Head of caudate nucleus (tissue), 42 donors: ENCODE measurements at regions of chr9 and their contacts with region 1.

Region 1: GRCh38 chr9:14344053-14344524 is 30.1 kb upstream of the NFIB start:
- DNase-seq: peak; percentile 84 to 97 (median 93)

Region 2: GRCh38 chr9:14107977-14108376 is 236.1 kb before region 1 on chr9:
- intact Hi-C with region 1: no loop called
- DNase-seq: no peak

Region 3: GRCh38 chr9:14314929-14315645 is 29.0 kb before region 1 on chr9:
- intact Hi-C with region 1: loop called (anchors 2 kb)
- DNase-seq: peak; percentile 67 to 98 (median 94)

Region 4: DNA sequence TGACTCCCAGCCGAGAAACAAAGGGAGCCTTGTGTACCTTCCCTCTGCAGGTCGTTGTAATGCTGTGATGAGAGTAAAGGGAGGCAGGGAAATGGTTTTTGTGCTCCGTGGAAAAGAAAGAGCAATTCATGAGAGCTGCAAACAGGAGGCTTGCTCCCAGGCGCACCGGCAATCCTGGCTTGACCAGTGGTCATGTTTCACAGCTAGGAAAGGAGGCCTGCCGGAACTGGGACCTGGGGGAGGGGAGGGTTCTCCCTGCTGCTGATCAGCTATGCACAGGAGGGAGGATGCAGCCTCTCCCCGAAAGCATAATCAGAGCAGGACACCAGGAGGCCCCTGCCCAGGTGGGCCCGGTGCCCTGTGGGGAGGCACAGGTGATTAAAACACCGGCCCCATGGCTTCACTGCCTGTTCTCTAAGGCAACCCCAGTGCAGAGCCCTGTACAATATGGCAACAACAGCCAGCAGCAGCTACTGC is 217.9 kb after region 1 on chr9:
- intact Hi-C with region 1: no loop called
- DNase-seq: peak in 1 of 42 donors; percentile 9